ENCODE measurements at regions of chr9 and their contacts with region 1.

Region 1: DNA sequence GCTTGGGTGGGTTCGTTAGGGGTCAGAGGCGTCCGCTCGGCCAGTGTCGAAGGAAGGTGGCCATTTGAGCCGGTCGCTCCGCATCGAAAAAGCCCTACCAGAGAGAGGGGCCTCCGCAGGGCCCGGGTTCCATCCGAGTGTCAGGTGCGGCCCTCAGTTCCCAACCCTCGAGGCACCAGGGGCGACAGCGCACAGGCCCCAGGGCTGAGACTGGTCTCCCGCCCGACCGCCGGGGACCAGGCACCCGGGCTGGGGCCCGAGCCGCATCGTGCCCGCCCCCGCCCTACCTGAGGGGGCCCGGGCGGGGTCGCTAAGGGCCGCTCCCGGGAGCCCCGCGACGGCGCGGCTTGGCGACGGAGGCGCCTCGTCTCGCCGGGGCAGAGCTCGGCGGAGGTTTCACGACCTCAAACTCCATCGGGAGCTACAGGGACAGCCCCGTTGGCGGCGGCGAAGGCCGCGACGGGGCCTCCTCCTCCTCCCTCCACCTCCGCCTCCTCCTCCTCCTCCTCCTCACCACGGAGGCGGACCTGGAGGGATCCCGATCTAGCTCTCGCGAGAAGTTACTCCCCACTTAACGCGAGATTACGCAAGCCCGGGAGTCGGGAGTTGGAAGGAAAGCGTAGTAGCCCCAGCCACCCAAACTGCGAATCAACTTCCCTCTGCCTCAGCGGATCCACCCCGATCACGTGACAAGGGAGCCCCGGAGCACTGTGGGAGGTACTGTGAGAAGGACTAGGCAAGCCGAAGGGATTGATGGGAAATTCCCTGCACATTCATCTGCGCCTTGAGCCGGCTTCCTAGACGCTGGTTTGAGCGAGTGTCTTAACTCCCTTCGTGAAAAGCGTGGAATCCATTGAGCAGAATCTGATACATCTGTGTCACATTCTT is at the start of gene RC3H2:
- DNase-seq: peak; percentile 80 to 99 (median 97)
- ATAC-seq: peak; percentile 94
- H3K4me3 ChIP-seq: peak within 1 kb of the TSS; percentile 74
- H3K4me3 Mint-ChIP-seq: peak within 1 kb of the TSS; percentile 89 to 96 (median 93)
- H3K27ac ChIP-seq: peak within 1 kb of the TSS; percentile 100
- H3K27ac Mint-ChIP-seq: peak within 1 kb of the TSS; percentile 93 to 98 (median 95)
- H3K4me1 ChIP-seq: peaks cover 14 to 21% of the 10 kb centered on the region in 2 donors
- H3K4me1 Mint-ChIP-seq: peaks cover 11 to 47% (median 40%) of the 10 kb centered on the region in 7 donors
- H3K27me3 ChIP-seq: no peaks in the 10 kb centered on the region
- H3K27me3 Mint-ChIP-seq: peaks cover 0 to 3% (median 0%) of the 10 kb centered on the region in 5 donors
- total RNA-seq, gene RC3H2: 52.3 to 66.4 (median 57.0) TPM

Region 2: DNA sequence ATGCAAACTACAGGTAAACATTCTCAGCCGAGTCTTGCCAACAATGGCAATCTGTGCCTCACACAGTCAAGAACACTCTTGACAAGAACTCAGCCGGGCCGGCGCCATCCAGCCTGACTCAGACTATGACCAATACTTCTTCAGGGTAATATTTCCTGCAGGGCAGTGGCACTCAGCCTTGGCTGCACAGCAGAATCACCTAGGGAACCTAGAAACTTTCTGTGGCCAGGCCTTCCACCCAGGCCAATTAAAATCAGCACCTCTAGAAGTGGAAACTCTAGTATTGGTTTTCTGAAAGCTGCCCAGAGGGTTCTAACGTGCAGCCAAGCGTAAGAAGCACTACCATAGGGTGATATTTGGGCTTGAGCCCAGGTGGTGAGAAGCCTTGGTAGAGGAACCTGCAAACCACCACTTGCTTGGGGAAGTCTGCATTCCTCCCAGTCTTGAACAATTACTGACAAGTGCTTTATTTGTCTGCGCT is 932.5 kb before region 1 on chr9:
- CTCF ChIA-PET with region 1: no interaction called
- POLR2A ChIA-PET with region 1: no interaction called
- intact Hi-C with region 1: no loop called
- DNase-seq: no peak
- ATAC-seq: no peak
- H3K4me3 ChIP-seq: no peak overlapping the region
- H3K4me3 Mint-ChIP-seq: no peak overlapping the region
- H3K27ac ChIP-seq: no peak overlapping the region
- H3K27ac Mint-ChIP-seq: no peak overlapping the region
- H3K4me1 ChIP-seq: no peaks in the 10 kb centered on the region
- H3K4me1 Mint-ChIP-seq: peaks cover 0 to 9% (median 0%) of the 10 kb centered on the region in 7 donors
- H3K27me3 ChIP-seq: no peaks in the 10 kb centered on the region
- H3K27me3 Mint-ChIP-seq: no peaks in the 10 kb centered on the region

Region 3: DNA sequence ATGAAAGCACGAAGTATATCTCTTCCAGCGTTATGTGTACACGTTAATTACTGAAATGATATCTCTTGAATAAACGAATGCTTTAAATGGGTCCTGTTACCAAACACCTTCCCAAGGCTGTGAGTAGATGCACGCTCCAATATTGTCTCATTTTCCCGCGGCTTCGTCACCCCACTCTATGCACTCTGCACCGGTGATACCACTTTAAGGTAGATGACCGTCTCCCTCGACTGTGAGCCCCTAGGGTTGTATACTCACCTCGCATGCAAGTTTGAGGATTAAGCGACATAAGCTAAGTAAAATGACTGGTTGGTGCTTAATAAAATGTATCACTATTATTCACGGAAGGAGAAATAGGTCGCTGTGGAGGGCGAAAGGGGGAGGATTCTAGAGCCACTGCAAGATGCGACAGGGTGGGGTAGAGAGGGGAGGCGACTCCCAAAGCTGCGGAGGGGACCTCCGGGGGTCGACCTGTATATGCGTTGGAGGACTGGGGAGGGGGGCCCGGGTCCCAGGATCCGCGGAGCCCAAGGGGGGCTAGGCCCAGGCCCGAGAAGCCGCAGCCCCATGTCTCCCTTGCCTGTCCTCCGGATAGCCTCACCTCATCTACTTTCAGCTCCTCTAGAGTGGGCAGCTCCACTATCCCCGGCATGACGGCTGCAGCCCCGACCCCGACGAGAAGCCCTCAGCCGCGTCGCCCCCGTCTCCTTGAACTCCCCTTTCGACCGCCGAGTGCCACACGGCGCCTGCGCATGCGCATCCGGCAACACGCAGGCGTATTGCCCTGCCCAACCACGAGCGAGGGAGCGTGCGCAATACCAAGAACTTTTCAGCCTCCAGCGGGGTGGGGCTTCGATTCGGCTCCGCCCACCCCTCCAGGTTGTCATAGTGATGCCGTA is 745.8 kb before region 1 on chr9 and contains the starts of genes MORN5 and NDUFA8:
- CTCF ChIA-PET with region 1: no interaction called
- POLR2A ChIA-PET with region 1: no interaction called
- intact Hi-C with region 1: loop called in 1 of 2 experiments (anchors 5 kb)
- DNase-seq: peak; percentile 94 to 97 (median 96)
- ATAC-seq: peak; percentile 98
- H3K4me3 ChIP-seq: peak within 1 kb of the TSS; percentile 74
- H3K4me3 Mint-ChIP-seq: peak within 1 kb of the TSS; percentile 94 to 100 (median 99)
- H3K27ac ChIP-seq: peak within 1 kb of the TSS; percentile 88
- H3K27ac Mint-ChIP-seq: peak within 1 kb of the TSS; percentile 90 to 99 (median 96)
- H3K4me1 ChIP-seq: peaks cover 7% of the 10 kb centered on the region in 2 donors
- H3K4me1 Mint-ChIP-seq: peaks cover 23 to 51% (median 47%) of the 10 kb centered on the region in 7 donors
- H3K27me3 ChIP-seq: no peaks in the 10 kb centered on the region
- H3K27me3 Mint-ChIP-seq: peaks cover 8 to 25% (median 20%) of the 10 kb centered on the region in 5 donors
- total RNA-seq, gene MORN5: not detected
- total RNA-seq, gene NDUFA8: 6.7 to 35.0 (median 15.6) TPM

Region 4: DNA sequence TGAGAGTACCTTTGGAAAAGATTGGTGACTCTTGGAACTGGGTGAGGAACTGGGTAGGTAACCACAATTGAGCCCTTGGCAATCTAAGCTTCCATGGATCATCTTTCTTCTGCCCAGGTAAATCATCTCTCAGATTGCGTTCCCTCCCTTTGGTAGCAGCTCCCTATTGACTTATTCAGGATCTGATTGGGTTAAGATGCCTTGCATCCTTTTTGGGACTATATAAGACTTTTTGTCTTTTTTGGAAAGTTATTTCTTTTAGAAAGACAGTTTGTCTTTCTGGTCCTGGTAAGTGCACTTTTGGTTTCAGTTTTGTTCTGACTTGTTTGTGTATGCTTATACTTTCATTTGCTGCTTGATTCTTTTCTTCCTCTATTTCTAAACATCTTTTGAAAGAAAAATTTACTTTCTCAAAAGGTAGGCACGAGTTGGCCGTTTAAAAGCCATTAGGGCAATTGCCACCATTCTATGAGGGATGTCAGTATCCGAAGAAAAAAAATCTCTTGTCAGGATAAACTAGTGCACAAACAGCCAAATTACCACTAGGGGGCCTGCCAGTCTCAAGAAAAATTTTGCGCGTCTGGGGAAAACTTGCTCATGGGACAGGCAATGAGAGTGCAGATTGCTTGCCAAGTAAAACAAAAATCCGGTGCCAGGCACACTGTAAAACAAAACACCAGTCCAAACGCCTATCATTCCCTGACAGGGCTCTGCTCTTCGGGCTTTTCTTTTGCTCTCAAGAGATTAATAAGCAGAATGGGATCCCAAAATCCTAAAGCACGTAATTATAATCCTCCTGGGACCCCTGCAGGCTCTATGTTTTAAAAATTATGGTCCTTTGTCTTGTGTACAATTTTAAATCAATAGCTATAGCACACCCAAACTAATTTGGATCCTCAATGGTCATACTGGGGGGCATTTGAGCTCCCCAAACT is 440.2 kb before region 1 on chr9:
- CTCF ChIA-PET with region 1: no interaction called
- POLR2A ChIA-PET with region 1: no interaction called
- intact Hi-C with region 1: loop called in 1 of 2 experiments (anchors 10 kb)
- DNase-seq: peak; percentile 24 to 80 (median 73)
- ATAC-seq: peak; percentile 84
- H3K4me3 ChIP-seq: peak overlapping the region; percentile 71
- H3K4me3 Mint-ChIP-seq: peak overlapping the region; percentile 77 to 96 (median 90)
- H3K27ac ChIP-seq: peak overlapping the region; percentile 57
- H3K27ac Mint-ChIP-seq: peak overlapping the region; percentile 49 to 94 (median 87)
- H3K4me1 ChIP-seq: peaks cover 0 to 5% of the 10 kb centered on the region in 2 donors
- H3K4me1 Mint-ChIP-seq: peaks cover 6 to 20% (median 14%) of the 10 kb centered on the region in 7 donors
- H3K27me3 ChIP-seq: no peaks in the 10 kb centered on the region
- H3K27me3 Mint-ChIP-seq: peaks cover 11 to 60% (median 43%) of the 10 kb centered on the region in 5 donors

Region 5: DNA sequence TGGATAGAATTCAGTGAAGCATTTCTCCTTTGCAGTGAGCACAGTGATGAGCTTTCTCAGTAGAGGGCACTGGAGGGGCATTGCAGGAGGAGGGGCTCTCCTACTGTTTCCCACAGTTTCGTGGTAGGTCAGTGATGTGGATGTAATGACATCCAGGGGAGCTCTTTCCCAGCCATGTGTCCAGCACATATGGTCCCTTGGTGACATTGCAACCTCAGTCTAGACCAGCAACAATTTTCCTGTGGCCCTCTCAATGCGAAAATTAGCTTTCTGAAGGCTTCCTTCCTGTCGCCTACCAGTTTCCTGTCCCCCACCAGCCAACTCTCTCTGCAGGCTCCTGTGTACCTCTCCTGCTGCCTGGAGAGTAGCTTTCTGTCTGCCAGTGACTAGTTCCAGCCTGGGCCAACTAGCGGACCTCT is 69.7 kb before region 1 on chr9:
- CTCF ChIA-PET with region 1: interaction called, 3 read pairs
- POLR2A ChIA-PET with region 1: interaction called, 16 read pairs
- intact Hi-C with region 1: no loop called
- DNase-seq: peak in 5 of 9 donors; percentile 33 to 45 (median 40)
- ATAC-seq: peak; percentile 71
- H3K4me3 ChIP-seq: peak overlapping the region; percentile 38
- H3K4me3 Mint-ChIP-seq: peak overlapping the region; percentile 62 to 88 (median 76)
- H3K27ac ChIP-seq: peak overlapping the region; percentile 48
- H3K27ac Mint-ChIP-seq: peak overlapping the region; percentile 80 to 94 (median 88)
- H3K4me1 ChIP-seq: peaks cover 6 to 11% of the 10 kb centered on the region in 2 donors
- H3K4me1 Mint-ChIP-seq: peaks cover 3 to 28% (median 18%) of the 10 kb centered on the region in 7 donors
- H3K27me3 ChIP-seq: no peaks in the 10 kb centered on the region
- H3K27me3 Mint-ChIP-seq: no peaks in the 10 kb centered on the region

Region 6: GRCh38 chr9:122940603-122941559 is 35.8 kb after region 1 on chr9 and contains the start of gene RABGAP1:
- CTCF ChIA-PET with region 1: interaction called, 5 read pairs
- POLR2A ChIA-PET with region 1: interaction called, 30 read pairs
- intact Hi-C with region 1: loop called (anchors 1 kb)
- DNase-seq: peak; percentile 89 to 98 (median 94)
- ATAC-seq: peak; percentile 99
- H3K4me3 ChIP-seq: peak within 1 kb of the TSS; percentile 84
- H3K4me3 Mint-ChIP-seq: peak within 1 kb of the TSS; percentile 90 to 99 (median 96)
- H3K27ac ChIP-seq: peak within 1 kb of the TSS; percentile 89
- H3K27ac Mint-ChIP-seq: peak within 1 kb of the TSS; percentile 80 to 98 (median 94)
- H3K4me1 ChIP-seq: peaks cover 10 to 12% of the 10 kb centered on the region in 2 donors
- H3K4me1 Mint-ChIP-seq: peaks cover 18 to 47% (median 39%) of the 10 kb centered on the region in 7 donors
- H3K27me3 ChIP-seq: no peaks in the 10 kb centered on the region
- H3K27me3 Mint-ChIP-seq: no peaks in the 10 kb centered on the region
- total RNA-seq, gene RABGAP1: 33.8 to 45.7 (median 45.0) TPM

Region 7: DNA sequence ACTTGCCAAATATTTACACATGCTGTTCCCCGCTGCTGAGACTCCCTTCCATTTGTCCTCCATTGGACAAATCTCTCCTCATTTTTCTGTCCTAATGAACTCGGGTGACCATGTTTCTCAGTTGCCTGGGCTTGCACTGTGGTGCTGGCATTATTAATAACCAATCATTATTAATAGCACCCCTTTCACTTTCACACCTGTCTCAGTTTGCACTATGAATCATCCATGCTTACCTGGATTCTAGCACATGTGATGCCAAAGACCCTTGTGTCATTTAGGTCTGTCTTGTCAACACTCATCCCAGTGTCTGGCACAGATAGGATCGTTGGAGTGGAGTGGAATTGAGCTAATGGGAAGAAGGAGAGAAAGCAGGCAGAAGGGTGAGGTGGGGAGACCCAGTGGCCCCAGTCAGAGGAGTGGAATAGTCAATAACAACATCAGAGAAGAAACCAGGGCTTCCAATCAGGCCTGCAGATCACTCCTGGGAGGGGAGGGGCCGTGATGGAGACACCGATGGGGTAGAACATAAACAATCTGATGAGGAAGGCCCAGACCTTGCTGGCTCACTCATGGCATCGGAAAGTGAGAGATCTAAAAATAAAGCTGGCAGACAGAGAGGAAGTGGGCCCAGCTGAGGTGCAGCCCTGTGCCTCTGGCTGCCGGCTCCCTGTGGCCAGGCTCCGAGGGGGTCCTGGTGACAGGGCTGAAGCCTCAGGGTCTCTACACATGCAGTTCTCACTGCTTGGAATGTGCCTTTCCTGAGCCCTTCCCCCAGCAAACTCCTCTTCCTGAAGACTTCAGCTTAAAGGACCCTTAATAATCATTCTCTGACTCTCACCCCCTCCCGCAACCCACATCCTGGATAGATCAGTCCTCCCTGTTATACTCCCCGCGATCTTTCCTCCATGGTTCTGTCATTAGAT is 417.5 kb after region 1 on chr9:
- CTCF ChIA-PET with region 1: no interaction called
- POLR2A ChIA-PET with region 1: no interaction called
- intact Hi-C with region 1: loop called in 1 of 2 experiments (anchors 10 kb)
- DNase-seq: peak; percentile 33 to 90 (median 83)
- ATAC-seq: peak; percentile 88
- H3K4me3 ChIP-seq: peak overlapping the region; percentile 37
- H3K4me3 Mint-ChIP-seq: peak overlapping the region; percentile 59 to 85 (median 74)
- H3K27ac ChIP-seq: peak overlapping the region; percentile 70
- H3K27ac Mint-ChIP-seq: peak overlapping the region; percentile 83 to 99 (median 94)
- H3K4me1 ChIP-seq: peaks cover 20 to 33% of the 10 kb centered on the region in 2 donors
- H3K4me1 Mint-ChIP-seq: peaks cover 24 to 56% (median 41%) of the 10 kb centered on the region in 7 donors
- H3K27me3 ChIP-seq: no peaks in the 10 kb centered on the region
- H3K27me3 Mint-ChIP-seq: no peaks in the 10 kb centered on the region